ENCODE measurements at regions of chr7 and their contacts with region 1.

Region 1: GRCh38 chr7:18666107-18666728 is 170.7 kb downstream of the HDAC9 start:
- DNase-seq: peak; percentile 85
- ATAC-seq: peak; percentile 82
- H3K4me3 Mint-ChIP-seq: no peak overlapping the region
- H3K27ac Mint-ChIP-seq: no peak overlapping the region
- H3K4me1 Mint-ChIP-seq: no peaks in the 10 kb centered on the region
- H3K27me3 Mint-ChIP-seq: peaks cover 3% of the 10 kb centered on the region

Region 2: DNA sequence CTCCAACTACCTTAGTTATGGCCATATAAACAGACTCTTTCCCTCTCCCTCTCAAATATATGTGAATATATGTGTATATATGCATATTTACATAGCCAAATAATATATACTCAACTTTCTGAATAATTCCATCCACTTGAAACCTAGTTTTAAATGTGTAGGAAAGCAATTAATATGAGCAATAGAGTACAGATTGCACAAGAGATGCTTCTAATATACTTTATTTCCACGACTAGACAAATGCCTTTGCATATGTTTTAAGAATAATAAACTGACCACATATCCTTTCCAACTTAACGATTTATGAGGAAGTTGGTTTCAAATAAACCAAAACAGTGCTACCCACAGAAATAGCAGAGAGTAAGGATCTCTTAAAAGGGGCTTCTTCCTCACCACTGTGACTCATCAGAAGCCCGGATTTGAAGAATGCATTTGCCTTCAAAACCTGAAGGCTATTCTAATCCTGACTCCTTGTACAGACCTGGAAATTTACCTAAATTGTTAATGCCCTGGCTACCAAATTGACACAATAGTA is 1101.5 kb before region 1 on chr7:
- CTCF ChIA-PET with region 1: no interaction called
- POLR2A ChIA-PET with region 1: no interaction called
- intact Hi-C with region 1: no loop called
- DNase-seq: no peak
- ATAC-seq: no peak
- H3K4me3 Mint-ChIP-seq: no peak overlapping the region
- H3K27ac Mint-ChIP-seq: no peak overlapping the region
- H3K4me1 Mint-ChIP-seq: no peaks in the 10 kb centered on the region
- H3K27me3 Mint-ChIP-seq: peaks cover 8% of the 10 kb centered on the region

Region 3: DNA sequence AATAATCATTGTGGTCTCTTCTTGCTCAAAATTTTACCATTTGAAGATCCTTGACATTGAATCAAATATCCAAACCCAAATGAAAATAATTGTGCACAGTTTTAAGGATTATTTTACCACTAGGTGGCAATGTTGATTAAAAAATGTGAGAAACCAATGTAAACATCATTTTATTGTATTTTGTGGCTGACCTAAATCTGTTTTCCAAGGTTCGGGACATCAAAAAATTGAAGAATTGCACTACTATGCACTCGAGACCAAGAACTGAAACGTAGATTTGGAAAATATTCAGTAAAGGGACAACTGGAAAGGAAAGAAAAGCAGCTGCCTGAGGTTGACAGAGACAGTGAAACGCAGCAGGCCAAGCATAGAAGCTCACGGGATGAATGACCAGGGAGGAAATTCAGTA is 985.3 kb before region 1 on chr7:
- CTCF ChIA-PET with region 1: interaction called, 3 read pairs
- POLR2A ChIA-PET with region 1: no interaction called
- intact Hi-C with region 1: loop called in 1 of 2 experiments (anchors 2 kb)
- DNase-seq: no peak
- ATAC-seq: no peak
- H3K4me3 Mint-ChIP-seq: no peak overlapping the region
- H3K27ac Mint-ChIP-seq: no peak overlapping the region
- H3K4me1 Mint-ChIP-seq: no peaks in the 10 kb centered on the region
- H3K27me3 Mint-ChIP-seq: no peaks in the 10 kb centered on the region

Region 4: GRCh38 chr7:18445916-18446520 is 220.2 kb before region 1 on chr7:
- CTCF ChIA-PET with region 1: no interaction called
- POLR2A ChIA-PET with region 1: no interaction called
- intact Hi-C with region 1: no loop called
- DNase-seq: no peak
- ATAC-seq: no peak
- H3K4me3 Mint-ChIP-seq: no peak overlapping the region
- H3K27ac Mint-ChIP-seq: no peak overlapping the region
- H3K4me1 Mint-ChIP-seq: no peaks in the 10 kb centered on the region
- H3K27me3 Mint-ChIP-seq: no peaks in the 10 kb centered on the region

Region 5: GRCh38 chr7:18494821-18495408 is 171.3 kb before region 1 on chr7:
- CTCF ChIA-PET with region 1: no interaction called
- POLR2A ChIA-PET with region 1: no interaction called
- intact Hi-C with region 1: loop called in 1 of 2 experiments (anchors 5 kb)
- DNase-seq: peak; percentile 46
- ATAC-seq: peak; percentile 77
- H3K4me3 Mint-ChIP-seq: no peak overlapping the region
- H3K27ac Mint-ChIP-seq: no peak overlapping the region
- H3K4me1 Mint-ChIP-seq: peaks cover 14% of the 10 kb centered on the region
- H3K27me3 Mint-ChIP-seq: peaks cover 9% of the 10 kb centered on the region

Region 6: DNA sequence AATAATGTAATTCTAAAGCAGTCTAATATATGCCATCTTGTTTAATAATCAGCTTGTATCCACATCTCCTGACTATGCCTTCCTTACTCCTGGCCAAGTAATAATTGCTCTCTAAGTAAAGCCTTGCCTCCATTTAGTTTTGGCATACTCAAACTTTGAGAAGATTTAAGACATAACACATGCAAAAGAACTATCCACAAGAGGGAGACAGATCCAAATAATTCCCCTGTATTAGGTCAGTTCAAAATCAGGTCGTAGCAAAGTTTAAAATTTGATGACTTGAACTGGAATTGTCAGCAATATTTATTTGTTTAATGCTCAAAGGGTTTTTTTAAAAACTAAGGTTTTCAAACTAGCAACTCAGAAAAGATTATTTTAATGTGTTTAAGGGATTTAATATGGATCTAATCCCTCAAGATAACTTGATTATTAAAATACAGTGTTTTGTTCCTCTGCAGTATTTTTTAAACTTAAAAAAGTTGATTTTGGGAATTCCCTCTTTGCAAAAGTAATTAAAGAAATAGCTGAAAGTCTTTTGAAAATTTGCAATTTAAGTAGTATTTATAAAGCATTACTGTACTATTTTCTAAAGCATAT is 75.4 kb before region 1 on chr7:
- CTCF ChIA-PET with region 1: interaction called, 4 read pairs
- POLR2A ChIA-PET with region 1: no interaction called
- intact Hi-C with region 1: loop called (anchors 1 to 2 kb)
- DNase-seq: no peak
- ATAC-seq: no peak
- H3K4me3 Mint-ChIP-seq: no peak overlapping the region
- H3K27ac Mint-ChIP-seq: no peak overlapping the region
- H3K4me1 Mint-ChIP-seq: no peaks in the 10 kb centered on the region
- H3K27me3 Mint-ChIP-seq: no peaks in the 10 kb centered on the region

Region 7: GRCh38 chr7:18740579-18740988 is 74.4 kb after region 1 on chr7:
- CTCF ChIA-PET with region 1: no interaction called
- POLR2A ChIA-PET with region 1: no interaction called
- intact Hi-C with region 1: no loop called
- DNase-seq: no peak
- ATAC-seq: peak; percentile 76
- H3K4me3 Mint-ChIP-seq: no peak overlapping the region
- H3K27ac Mint-ChIP-seq: no peak overlapping the region
- H3K4me1 Mint-ChIP-seq: no peaks in the 10 kb centered on the region
- H3K27me3 Mint-ChIP-seq: no peaks in the 10 kb centered on the region